ENCODE measurements at regions of chr5 and their contacts with region 1.

Region 1: GRCh38 chr5:142012792-142013388 is at the start of gene GNPDA1:
- DNase-seq: peak; percentile 77
- H3K4me3 Mint-ChIP-seq: peak within 1 kb of the TSS; percentile 82
- H3K27ac Mint-ChIP-seq: peak within 1 kb of the TSS; percentile 96
- H3K4me1 Mint-ChIP-seq: peaks cover 91% of the 10 kb centered on the region
- H3K27me3 Mint-ChIP-seq: no peaks in the 10 kb centered on the region

Region 2: DNA sequence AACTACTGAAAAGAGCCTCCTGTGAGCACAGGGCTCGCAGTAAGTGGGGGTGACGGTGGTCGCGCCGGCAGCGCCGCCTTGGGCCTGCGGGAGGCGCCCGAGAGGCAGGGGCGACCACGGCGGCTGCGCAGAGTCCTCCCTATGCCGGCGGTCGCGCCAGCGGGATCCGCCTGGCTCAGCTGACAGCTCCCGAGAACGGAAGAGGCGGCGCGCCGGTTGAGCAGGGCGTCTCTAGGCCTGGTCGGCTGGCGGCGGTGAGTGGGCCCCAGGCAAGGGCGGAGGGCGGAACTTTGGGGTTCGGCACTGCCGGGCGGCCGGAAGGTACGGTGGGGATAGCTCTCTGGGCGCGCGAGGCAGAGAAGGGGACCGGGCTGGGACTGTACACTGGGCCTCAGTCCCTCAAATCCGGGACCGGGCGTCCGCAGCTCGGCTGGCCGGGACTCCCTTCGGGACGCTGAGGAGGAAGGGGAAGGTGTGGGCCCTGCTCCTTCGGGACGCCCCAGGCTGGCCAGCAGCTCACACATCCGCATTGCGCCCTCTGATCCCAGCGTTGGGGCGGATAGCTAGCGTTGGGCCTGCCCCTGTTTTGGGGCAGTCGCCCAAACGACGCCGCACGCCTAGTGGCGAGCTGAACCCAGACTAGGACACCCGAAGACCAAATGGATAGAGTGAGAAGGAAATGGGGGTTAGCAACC is 43.8 kb before region 1 on chr5 and contains the start of gene RNF14:
- CTCF ChIA-PET with region 1: interaction called, 17 read pairs
- DNase-seq: peak; percentile 96
- H3K4me3 Mint-ChIP-seq: peak within 1 kb of the TSS; percentile 80
- H3K27ac Mint-ChIP-seq: peak within 1 kb of the TSS; percentile 97
- H3K4me1 Mint-ChIP-seq: peaks cover 35% of the 10 kb centered on the region
- H3K27me3 Mint-ChIP-seq: peaks cover 5% of the 10 kb centered on the region

Region 3: DNA sequence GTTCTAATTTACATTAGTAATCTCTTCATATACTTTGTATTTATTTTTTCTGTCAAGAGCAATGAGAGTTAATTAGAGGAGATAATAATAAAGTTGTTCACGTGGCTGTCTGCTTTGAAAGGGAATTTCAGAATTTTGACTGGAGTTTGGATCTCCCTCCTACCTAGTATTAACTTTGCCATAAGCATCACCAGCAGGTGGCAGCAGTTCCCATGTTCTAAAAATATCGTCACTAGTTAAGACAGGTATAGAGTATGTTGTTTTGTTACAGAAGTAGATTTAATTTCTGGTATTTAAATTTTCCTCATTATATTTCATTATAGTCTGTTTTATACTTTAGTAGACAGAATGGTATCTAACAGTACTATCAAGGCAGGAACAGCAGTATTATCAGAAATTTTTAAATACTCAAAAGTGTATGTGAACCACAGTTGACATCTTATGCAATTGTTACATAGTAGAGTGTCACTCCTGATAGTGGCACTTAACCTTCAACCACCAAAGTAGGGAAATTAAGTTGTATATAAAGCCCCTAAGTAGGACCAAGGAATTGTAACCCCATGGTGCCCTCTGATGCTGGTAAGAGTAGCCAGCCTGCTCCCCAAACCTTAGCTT is 20.4 kb before region 1 on chr5:
- CTCF ChIA-PET with region 1: interaction called, 78 read pairs
- DNase-seq: peak; percentile 87
- H3K4me3 Mint-ChIP-seq: no peak overlapping the region
- H3K27ac Mint-ChIP-seq: no peak overlapping the region
- H3K4me1 Mint-ChIP-seq: no peaks in the 10 kb centered on the region
- H3K27me3 Mint-ChIP-seq: no peaks in the 10 kb centered on the region

Region 4: GRCh38 chr5:142000703-142001484 is 12.0 kb before region 1 on chr5:
- CTCF ChIA-PET with region 1: interaction called, 69 read pairs
- DNase-seq: no peak
- H3K4me3 Mint-ChIP-seq: no peak overlapping the region
- H3K27ac Mint-ChIP-seq: no peak overlapping the region
- H3K4me1 Mint-ChIP-seq: peaks cover 36% of the 10 kb centered on the region
- H3K27me3 Mint-ChIP-seq: no peaks in the 10 kb centered on the region

Region 5: GRCh38 chr5:142095651-142096330 is 82.9 kb after region 1 on chr5:
- CTCF ChIA-PET with region 1: interaction called, 12 read pairs
- DNase-seq: peak; percentile 88
- H3K4me3 Mint-ChIP-seq: peak overlapping the region; percentile 9
- H3K27ac Mint-ChIP-seq: peak overlapping the region; percentile 91
- H3K4me1 Mint-ChIP-seq: peaks cover 55% of the 10 kb centered on the region
- H3K27me3 Mint-ChIP-seq: no peaks in the 10 kb centered on the region

Region 6: DNA sequence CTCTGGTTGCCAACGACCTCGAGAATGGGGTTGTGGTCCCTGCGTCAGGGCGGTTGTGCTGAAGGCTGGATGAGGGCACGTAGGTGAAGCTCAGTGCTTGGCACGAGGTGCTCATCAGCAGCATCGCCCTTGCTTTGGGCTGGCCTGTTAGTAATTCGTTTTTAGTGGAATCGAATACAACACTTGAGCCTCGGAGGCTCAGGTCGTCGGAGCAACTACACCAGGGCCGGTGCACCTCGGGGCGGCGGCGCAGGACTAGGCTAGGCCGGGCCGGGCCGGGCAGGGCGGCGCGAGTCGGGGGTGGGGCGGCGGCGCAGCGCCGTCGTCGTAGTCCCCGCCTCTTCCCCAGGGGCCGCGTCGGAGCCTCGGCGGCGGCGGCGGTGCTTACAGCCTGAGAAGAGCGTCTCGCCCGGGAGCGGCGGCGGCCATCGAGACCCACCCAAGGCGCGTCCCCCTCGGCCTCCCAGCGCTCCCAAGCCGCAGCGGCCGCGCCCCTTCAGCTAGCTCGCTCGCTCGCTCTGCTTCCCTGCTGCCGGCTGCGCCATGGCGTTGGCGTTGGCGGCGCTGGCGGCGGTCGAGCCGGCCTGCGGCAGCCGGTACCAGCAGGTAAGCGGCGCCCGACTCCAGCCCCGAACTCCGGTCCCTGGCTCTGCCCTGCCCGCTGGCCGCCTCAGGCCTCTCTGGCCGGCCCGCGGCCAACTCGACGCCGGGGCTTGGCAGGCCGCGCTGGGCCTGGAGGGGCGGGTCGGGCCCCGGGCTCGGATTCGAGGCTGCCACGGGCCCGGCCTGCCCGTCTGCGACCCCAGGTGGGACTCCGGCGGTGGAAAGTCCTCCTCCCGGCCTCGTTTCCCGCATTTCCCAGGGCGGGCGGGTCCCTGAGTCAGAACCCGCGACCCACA is 95.8 kb after region 1 on chr5 and contains the start of gene NDFIP1:
- CTCF ChIA-PET with region 1: interaction called, 45 read pairs
- DNase-seq: peak; percentile 89
- H3K4me3 Mint-ChIP-seq: peak within 1 kb of the TSS; percentile 97
- H3K27ac Mint-ChIP-seq: peak within 1 kb of the TSS; percentile 98
- H3K4me1 Mint-ChIP-seq: peaks cover 77% of the 10 kb centered on the region
- H3K27me3 Mint-ChIP-seq: no peaks in the 10 kb centered on the region